ENCODE measurements at regions of chr9 and their contacts with region 1.

Region 1: DNA sequence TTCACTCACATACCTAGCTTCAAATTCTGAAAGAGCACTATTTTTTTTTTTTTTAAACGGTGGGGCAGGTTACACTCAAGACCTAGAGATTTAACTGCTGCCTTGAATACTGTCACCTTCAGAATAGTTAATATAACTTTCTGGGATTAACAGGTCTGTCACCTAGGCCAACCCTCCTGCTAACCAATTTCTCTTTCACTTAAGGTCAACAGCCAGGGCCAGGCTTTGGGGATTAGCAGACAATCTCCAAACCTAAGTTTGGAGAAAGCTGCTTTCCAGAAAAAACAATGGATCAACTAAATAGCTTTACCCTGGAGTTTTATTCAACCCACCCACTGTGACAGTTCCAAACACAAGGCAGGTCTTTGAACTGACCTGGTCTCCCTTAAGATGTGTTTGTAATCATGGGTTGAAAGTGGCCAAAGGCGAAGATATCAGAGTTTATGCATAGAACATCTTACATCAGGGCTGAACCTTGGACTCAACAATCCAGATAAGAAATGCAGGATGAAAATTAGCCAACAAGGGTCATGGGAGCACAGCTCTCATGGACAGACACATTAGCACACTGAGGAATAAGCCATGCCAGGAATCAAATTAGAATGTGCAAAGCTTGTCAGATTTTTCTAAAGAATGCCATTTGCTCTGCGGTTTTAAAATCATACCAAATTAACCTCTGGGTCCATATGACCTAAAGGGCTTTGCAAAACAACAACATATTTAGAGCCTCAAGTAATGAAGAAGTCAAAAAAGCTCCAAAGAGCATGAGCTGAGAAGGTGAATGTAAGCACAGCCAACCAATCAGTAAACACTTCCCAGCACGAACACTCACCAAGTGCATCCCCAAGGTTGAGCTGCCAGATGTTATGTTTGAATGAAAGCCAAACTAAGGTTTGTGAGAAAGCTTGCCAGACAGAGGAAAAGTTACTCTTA is 538.5 kb upstream of the DMAC1 start:
- DNase-seq: no peak
- ATAC-seq: peak in 6 of 8 donors; percentile 30 to 83 (median 52)
- H3K4me3 ChIP-seq: no peak overlapping the region
- H3K27ac ChIP-seq: no peak overlapping the region
- H3K4me1 ChIP-seq: peaks cover 0 to 13% (median 4%) of the 10 kb centered on the region in 9 donors
- H3K27me3 ChIP-seq: no peaks in the 10 kb centered on the region
- CTCF ChIP-seq: no peak

Region 2: GRCh38 chr9:9560382-9561035 is 1222.4 kb after region 1 on chr9:
- intact Hi-C with region 1: loop called in 1 of 10 experiments (anchors 5 kb)
- DNase-seq: no peak
- ATAC-seq: no peak
- H3K4me3 ChIP-seq: no peak overlapping the region
- H3K27ac ChIP-seq: no peak overlapping the region
- H3K4me1 ChIP-seq: no peaks in the 10 kb centered on the region
- H3K27me3 ChIP-seq: no peaks in the 10 kb centered on the region
- CTCF ChIP-seq: no peak